ENCODE measurements at regions of chr2 and their contacts with region 1.

Region 1: DNA sequence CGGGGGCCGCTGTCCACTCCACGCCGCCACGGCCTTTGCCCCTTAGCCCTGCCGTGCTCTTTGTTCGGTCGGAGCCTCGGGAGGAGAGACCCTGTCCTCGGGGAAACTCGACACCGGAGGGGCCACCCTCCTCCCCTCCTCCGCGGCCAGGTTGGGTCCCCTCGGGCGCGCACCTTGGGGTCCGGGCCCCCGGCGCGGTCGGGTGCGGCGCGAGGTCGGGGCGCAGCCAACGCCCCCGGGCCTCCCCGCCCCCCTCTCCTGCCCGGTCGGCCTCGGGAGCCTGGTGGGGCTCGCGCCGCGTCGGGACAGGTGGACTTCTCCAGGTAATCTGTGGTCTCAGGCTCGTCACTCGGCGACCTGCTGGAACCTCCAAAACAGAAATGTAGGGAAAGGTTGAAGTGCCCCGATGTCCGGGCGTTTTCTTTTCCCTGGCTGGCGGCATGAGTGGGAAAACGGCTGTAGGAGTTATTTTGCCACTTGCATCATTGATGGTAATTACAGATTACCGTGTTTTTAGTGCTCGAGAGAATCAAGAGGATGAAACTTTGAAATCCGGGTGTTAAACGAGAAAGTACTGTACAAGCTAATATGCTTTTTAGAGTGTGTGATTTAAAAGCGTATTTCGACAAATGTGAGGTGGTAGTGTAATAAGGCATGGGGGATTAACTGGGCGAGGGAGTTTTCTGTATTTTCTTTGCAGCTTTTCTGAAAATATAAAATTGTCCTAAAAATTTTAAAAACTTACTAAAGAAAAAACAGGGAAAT is 662 bp downstream of the GRHL1 start:
- DNase-seq: no peak
- ATAC-seq: no peak; the same call in 1 of the 2 replicates
- H3K4me3 ChIP-seq: peak overlapping the region; percentile 55 to 72
- H3K27ac ChIP-seq: no peak overlapping the region; the same call in 1 of the 2 replicates
- H3K4me1 ChIP-seq: peaks cover 13 to 31% of the 10 kb centered on the region in 2 experiments
- H3K27me3 ChIP-seq: no peaks in the 10 kb centered on the region
- CTCF ChIP-seq: no peak
- POLR2A ChIP-seq: no peak
- RAD21 ChIP-seq: no peak

Region 2: GRCh38 chr2:9720352-9721093 is 231.6 kb before region 1 on chr2:
- CTCF ChIA-PET with region 1: no interaction called
- POLR2A ChIA-PET with region 1: no interaction called
- RAD21 ChIA-PET with region 1: no interaction called
- intact Hi-C with region 1: no loop called
- DNase-seq: no peak
- ATAC-seq: no peak
- H3K4me3 ChIP-seq: no peak overlapping the region
- H3K27ac ChIP-seq: no peak overlapping the region
- H3K4me1 ChIP-seq: no peaks in the 10 kb centered on the region
- H3K27me3 ChIP-seq: no peaks in the 10 kb centered on the region
- CTCF ChIP-seq: no peak
- POLR2A ChIP-seq: no peak
- RAD21 ChIP-seq: no peak

Region 3: GRCh38 chr2:9975805-9976447 is 23.8 kb after region 1 on chr2:
- CTCF ChIA-PET with region 1: no interaction called
- POLR2A ChIA-PET with region 1: no interaction called
- RAD21 ChIA-PET with region 1: no interaction called
- intact Hi-C with region 1: loop called (anchors 2 kb)
- DNase-seq: peak; percentile 92
- ATAC-seq: peak; percentile 95
- H3K4me3 ChIP-seq: peak overlapping the region in 1 of 2 experiments; percentile 27; a peak in 2 of 4 replicates
- H3K27ac ChIP-seq: peak overlapping the region; percentile 56
- H3K4me1 ChIP-seq: peaks cover 31 to 35% of the 10 kb centered on the region in 2 experiments
- H3K27me3 ChIP-seq: no peaks in the 10 kb centered on the region
- CTCF ChIP-seq: no peak
- POLR2A ChIP-seq: no peak
- RAD21 ChIP-seq: no peak

Region 4: DNA sequence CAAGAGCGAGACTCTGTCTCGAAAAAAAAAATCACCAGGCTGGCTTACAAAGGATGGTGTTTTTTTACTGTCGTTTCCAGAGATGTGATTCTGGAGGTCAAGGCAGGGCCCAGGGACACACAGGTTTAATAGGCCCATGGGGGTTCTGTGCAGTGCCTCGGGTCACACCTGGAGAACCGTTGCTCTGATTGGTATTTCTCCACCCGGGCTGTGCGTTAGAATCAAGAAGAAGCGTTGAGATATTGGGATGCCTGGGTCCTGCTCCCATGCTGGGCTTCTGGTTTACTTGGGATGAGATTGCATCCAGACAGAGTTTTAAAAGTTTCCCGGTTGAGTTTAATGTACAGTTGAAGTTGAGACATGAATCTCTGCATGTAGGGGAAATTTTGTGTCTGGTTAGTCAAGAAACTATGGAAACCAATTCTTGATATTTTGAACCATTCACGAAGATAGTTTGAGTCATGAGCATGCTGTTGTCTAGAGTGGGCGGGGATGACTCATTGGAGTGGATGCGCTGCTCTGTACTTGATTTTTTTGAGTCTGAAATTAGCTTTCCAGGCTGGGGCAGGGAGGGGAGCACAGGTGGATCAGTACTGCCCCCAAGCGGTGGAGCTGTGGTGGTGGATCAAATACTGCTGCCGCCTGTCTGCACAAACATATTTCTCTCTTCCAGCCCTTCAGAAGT is 1631.8 kb after region 1 on chr2:
- CTCF ChIA-PET with region 1: no interaction called
- POLR2A ChIA-PET with region 1: no interaction called
- RAD21 ChIA-PET with region 1: no interaction called
- intact Hi-C with region 1: no loop called
- DNase-seq: peak; percentile 69
- ATAC-seq: peak; percentile 81
- H3K4me3 ChIP-seq: no peak overlapping the region
- H3K27ac ChIP-seq: no peak overlapping the region
- H3K4me1 ChIP-seq: peaks cover 4 to 21% of the 10 kb centered on the region in 2 experiments
- H3K27me3 ChIP-seq: no peaks in the 10 kb centered on the region
- CTCF ChIP-seq: peak; percentile 93 to 96 (median 94)
- POLR2A ChIP-seq: no peak
- RAD21 ChIP-seq: peak; percentile 96